ENCODE measurements at regions of chr12 and their contacts with region 1.

Region 1: GRCh38 chr12:122174155-122174845 is at the start of gene IL31:
- DNase-seq: no peak
- H3K4me3 ChIP-seq: no peak within 1 kb of the TSS
- H3K27me3 ChIP-seq: peaks cover 4% of the 10 kb centered on the region
- CTCF ChIP-seq: no peak
- polyA plus RNA-seq, gene IL31: not detected in 2 replicates

Region 2: GRCh38 chr12:122067966-122068365 is 106.3 kb before region 1 on chr12:
- CTCF ChIA-PET with region 1: no interaction called
- POLR2A ChIA-PET with region 1: no interaction called
- DNase-seq: no peak
- H3K4me3 ChIP-seq: no peak overlapping the region
- H3K27me3 ChIP-seq: no peaks in the 10 kb centered on the region
- CTCF ChIP-seq: no peak

Region 3: GRCh38 chr12:122107261-122107660 is 67.0 kb before region 1 on chr12:
- CTCF ChIA-PET with region 1: no interaction called
- POLR2A ChIA-PET with region 1: interaction called, 11 read pairs
- DNase-seq: no peak
- H3K4me3 ChIP-seq: no peak overlapping the region
- H3K27me3 ChIP-seq: no peaks in the 10 kb centered on the region
- CTCF ChIP-seq: no peak

Region 4: GRCh38 chr12:122159882-122160281 is 14.4 kb before region 1 on chr12:
- CTCF ChIA-PET with region 1: no interaction called
- POLR2A ChIA-PET with region 1: no interaction called
- DNase-seq: no peak
- H3K4me3 ChIP-seq: no peak overlapping the region
- H3K27me3 ChIP-seq: peaks cover 3% of the 10 kb centered on the region; the same call in 1 of the 2 replicates
- CTCF ChIP-seq: no peak

Measured in BJ (cell line).